Calu3 (cell line): ENCODE measurements at regions of chr12 and their contacts with region 1.

Region 1: GRCh38 chr12:112012775-112013600 is at the starts of genes ERP29 and TMEM116:
- DNase-seq: peak; percentile 99
- H3K4me3 Mint-ChIP-seq: peak within 1 kb of the TSS; percentile 99
- H3K27ac Mint-ChIP-seq: peak within 1 kb of the TSS; percentile 93
- H3K4me1 Mint-ChIP-seq: peaks cover 39% of the 10 kb centered on the region
- H3K27me3 Mint-ChIP-seq: no peaks in the 10 kb centered on the region
- CTCF ChIP-seq: peak; percentile 36
- total RNA-seq, gene ERP29: 162 and 165 TPM in 2 replicates
- total RNA-seq, gene TMEM116: 13.0 and 13.5 TPM in 2 replicates

Region 2: GRCh38 chr12:111904446-111904975 is 108.5 kb before region 1 on chr12:
- CTCF ChIA-PET with region 1: no interaction called
- intact Hi-C with region 1: no loop called
- DNase-seq: no peak
- H3K4me3 Mint-ChIP-seq: no peak overlapping the region
- H3K27ac Mint-ChIP-seq: no peak overlapping the region
- H3K4me1 Mint-ChIP-seq: no peaks in the 10 kb centered on the region
- H3K27me3 Mint-ChIP-seq: no peaks in the 10 kb centered on the region
- CTCF ChIP-seq: no peak

Region 3: GRCh38 chr12:111942557-111942956 is 70.4 kb before region 1 on chr12:
- CTCF ChIA-PET with region 1: interaction called, 16 read pairs
- intact Hi-C with region 1: loop called (anchors 2 kb)
- DNase-seq: peak; percentile 60
- H3K4me3 Mint-ChIP-seq: no peak overlapping the region
- H3K27ac Mint-ChIP-seq: peak overlapping the region; percentile 25
- H3K4me1 Mint-ChIP-seq: peaks cover 9% of the 10 kb centered on the region
- H3K27me3 Mint-ChIP-seq: no peaks in the 10 kb centered on the region
- CTCF ChIP-seq: no peak

Region 4: DNA sequence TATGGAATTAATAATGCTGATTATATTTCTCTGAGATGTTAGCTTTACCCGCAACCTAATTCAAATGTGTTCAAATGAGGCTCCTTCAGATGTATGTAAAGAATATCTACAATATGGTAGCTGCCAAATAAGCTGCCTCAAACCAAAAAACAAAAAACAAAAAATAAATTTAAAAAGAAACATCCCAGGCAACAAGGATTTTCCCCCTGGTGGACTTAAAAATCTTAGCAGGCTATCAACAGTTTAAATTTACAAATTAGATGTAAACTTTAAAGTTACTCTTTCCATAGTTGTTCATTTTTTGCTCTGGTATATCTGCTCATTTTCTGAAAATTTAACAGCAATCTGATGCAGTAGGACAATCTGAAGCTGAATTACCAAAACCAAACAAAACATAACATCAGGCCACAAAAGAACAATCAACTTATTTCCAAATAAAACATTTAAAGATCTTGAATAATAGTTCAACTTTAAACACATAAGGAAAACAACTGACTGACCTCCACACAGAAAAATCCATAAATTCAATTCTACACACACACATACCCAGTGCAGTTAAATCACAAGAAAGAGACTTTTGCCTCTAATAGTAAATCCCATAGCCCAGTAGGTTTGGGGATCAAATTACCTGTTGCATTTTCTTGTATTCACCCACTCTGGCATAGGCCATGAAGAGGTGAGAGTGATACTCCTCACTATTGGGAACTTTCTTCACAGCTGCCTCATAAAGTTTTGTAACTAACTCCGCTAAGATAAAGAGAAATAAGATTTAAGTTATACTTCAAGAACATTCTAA is 74.3 kb after region 1 on chr12:
- CTCF ChIA-PET with region 1: interaction called, 6 read pairs
- intact Hi-C with region 1: loop called (anchors 5 kb)
- DNase-seq: no peak
- H3K4me3 Mint-ChIP-seq: no peak overlapping the region
- H3K27ac Mint-ChIP-seq: no peak overlapping the region
- H3K4me1 Mint-ChIP-seq: no peaks in the 10 kb centered on the region
- H3K27me3 Mint-ChIP-seq: no peaks in the 10 kb centered on the region
- CTCF ChIP-seq: no peak